Activated T-helper 2 cell treated with anti-CD3 and anti-CD28 coated beads, Interferon-gamma antibody, Interleukin-2, Interleukin-4, amounts not matched to agents 10 μg/mL and 5 μg/mL and 100 μg/mL, durations not matched to agents 14 hours and 24 hours and 36 hours (primary cell): ENCODE measurements at regions of chr7 and their contacts with region 1.

Region 1: DNA sequence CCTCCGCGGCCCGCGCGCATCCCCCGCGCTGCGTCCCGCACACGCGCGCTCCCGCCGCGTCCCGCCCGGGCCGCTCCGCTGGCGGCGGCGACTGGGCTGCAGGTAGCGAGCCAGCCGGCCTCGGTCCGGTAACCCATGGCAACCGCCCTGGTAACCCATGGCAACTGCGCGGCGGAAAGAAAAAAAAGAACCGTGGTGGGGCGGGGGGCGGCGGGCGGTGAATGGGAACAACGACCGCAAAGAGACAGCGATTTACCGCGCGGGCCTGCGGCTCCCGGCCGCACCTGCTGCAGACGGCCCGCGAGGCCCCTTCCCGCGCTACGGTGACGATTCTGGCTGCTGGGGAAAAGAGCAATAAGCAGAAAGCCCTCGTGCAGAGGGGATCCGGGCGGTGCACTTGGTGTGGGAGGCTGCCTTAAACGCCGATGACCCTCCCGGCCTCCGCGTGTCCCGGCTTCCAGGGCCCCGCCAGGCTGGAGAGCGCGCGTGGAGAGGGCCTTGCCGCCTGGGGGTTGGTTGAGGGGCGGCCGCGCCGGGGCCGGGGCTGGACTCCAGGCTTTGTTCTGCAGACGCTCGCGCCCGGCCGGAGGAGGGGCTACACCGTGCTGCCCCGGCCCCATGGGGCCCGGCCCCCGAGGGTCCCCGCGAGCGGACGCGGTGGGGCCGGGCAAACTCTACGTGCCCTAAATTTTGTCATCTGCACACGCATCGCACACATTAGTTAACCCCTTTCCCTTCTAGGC is 84.7 kb downstream of the SNX10 start:
- DNase-seq: peak; percentile 27
- H3K4me3 Mint-ChIP-seq: peak overlapping the region; percentile 81
- H3K27ac Mint-ChIP-seq: peak overlapping the region; percentile 71
- H3K4me1 Mint-ChIP-seq: peaks cover 4% of the 10 kb centered on the region
- H3K27me3 Mint-ChIP-seq: peaks cover 7% of the 10 kb centered on the region

Region 2: GRCh38 chr7:26500749-26501352 is 124.5 kb after region 1 on chr7:
- intact Hi-C with region 1: loop called (anchors 2 kb)
- DNase-seq: no peak
- H3K4me3 Mint-ChIP-seq: no peak overlapping the region
- H3K27ac Mint-ChIP-seq: no peak overlapping the region
- H3K4me1 Mint-ChIP-seq: no peaks in the 10 kb centered on the region
- H3K27me3 Mint-ChIP-seq: peaks cover 13% of the 10 kb centered on the region